WTC11 (cell line): ENCODE measurements at regions of chr22 and their contacts with region 1.

Region 1: GRCh38 chr22:48782811-48783511 is 1044.7 kb downstream of the BRD1 start:
- DNase-seq: peak; percentile 51
- ATAC-seq: peak; percentile 80
- H3K4me3 Mint-ChIP-seq: no peak overlapping the region
- H3K27ac Mint-ChIP-seq: peak overlapping the region; percentile 44; the same call in 1 of the 2 replicates
- H3K4me1 Mint-ChIP-seq: peaks cover 22% of the 10 kb centered on the region
- H3K27me3 Mint-ChIP-seq: no peaks in the 10 kb centered on the region; the same call in 1 of the 2 replicates
- CTCF ChIP-seq: peak; percentile 58

Region 2: GRCh38 chr22:48772286-48772907 is 10.6 kb before region 1 on chr22:
- CTCF ChIA-PET with region 1: interaction called, 10 read pairs
- POLR2A ChIA-PET with region 1: no interaction called
- DNase-seq: no peak
- ATAC-seq: no peak
- H3K4me3 Mint-ChIP-seq: no peak overlapping the region
- H3K27ac Mint-ChIP-seq: no peak overlapping the region
- H3K4me1 Mint-ChIP-seq: no peaks in the 10 kb centered on the region
- H3K27me3 Mint-ChIP-seq: no peaks in the 10 kb centered on the region
- CTCF ChIP-seq: no peak

Region 3: GRCh38 chr22:48796310-48797015 is 13.5 kb after region 1 on chr22:
- CTCF ChIA-PET with region 1: interaction called, 17 read pairs
- POLR2A ChIA-PET with region 1: interaction called, 3 read pairs
- DNase-seq: peak; percentile 66
- ATAC-seq: peak; percentile 84
- H3K4me3 Mint-ChIP-seq: no peak overlapping the region
- H3K27ac Mint-ChIP-seq: peak overlapping the region; percentile 82
- H3K4me1 Mint-ChIP-seq: peaks cover 11% of the 10 kb centered on the region
- H3K27me3 Mint-ChIP-seq: no peaks in the 10 kb centered on the region
- CTCF ChIP-seq: no peak